CD8-positive, alpha-beta memory T cell (primary cell): ENCODE measurements at regions of chr2 and their contacts with region 1.

Region 1: DNA sequence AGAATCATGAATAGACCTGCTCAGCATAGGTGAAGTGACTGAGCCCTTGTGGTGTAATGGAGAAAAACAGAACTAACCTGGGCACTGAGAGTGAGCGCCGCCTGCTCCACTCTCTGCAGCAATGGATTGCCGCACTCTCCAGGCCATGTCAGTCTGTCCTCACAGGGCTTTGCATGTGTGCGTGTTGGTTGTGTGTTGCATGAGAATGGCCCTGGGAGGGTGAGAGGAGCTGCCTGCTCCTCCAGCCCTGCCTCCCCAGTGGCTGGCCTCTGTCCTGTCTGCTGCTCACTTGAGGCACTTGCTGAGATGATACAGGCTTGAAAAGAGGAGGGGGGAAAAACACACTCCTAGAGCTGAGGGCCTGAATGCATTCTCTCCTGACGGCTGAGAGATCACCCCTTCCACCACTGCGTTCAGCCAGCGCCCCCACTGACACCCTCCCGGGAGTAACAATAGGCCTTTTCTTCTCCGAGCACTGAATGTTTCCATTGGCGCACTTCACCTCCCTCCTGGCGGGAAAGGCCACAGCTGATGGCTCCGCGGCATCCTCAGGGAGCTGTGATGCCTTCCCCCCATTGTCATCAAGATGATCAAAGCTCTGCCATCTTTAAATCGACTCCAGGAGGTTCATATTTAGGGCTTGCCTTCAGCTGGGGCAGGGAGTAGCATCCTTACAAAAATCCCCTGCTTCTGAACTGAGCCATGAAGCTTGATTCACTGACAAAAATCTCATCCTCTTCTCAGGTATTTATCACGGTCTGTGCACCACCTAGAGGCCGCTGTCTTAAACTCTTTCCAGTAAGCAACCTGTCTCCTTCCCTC is 49.9 kb upstream of the DAPL1 start:
- DNase-seq: peak in 2 of 5 donors; percentile 14 to 24
- H3K4me3 ChIP-seq: no peak overlapping the region
- H3K4me3 Mint-ChIP-seq: no peak overlapping the region
- H3K27ac ChIP-seq: no peak overlapping the region
- H3K27ac Mint-ChIP-seq: no peak overlapping the region
- H3K4me1 ChIP-seq: no peaks in the 10 kb centered on the region
- H3K4me1 Mint-ChIP-seq: no peaks in the 10 kb centered on the region
- H3K27me3 ChIP-seq: peaks cover 7% of the 10 kb centered on the region
- H3K27me3 Mint-ChIP-seq: peaks cover 9 to 46% of the 10 kb centered on the region in 2 donors

Region 2: DNA sequence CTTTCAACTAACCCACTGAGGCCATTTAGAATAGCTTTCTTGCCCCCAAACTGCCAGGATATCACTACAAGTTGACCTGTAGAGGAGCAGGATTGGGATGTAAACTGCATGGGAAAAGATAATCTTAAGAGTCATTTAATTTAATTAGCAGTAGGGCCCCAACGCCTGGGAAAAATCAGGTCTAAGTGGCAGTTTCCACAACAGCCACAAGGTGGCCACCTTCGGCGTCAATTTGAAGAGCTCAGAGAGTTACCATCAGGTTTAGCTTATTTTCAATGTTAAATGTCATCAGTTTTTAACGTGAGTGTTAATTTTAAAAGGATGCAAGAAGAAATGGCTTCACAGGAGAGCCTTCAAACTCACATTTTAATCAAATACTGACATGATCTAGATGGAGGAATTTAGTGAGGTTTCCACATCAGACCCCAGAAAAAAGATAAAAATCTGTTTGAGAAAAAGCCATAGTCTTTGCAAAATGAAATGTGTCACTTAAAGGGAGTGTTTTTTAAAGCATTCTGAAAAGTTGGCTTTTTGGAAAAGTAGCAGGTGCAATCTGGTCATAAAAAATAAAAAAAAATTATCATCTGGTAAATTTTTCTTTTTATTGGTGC is 720.9 kb before region 1 on chr2:
- CTCF ChIA-PET with region 1: interaction called, 42 read pairs
- POLR2A ChIA-PET with region 1: no interaction called
- DNase-seq: peak in 4 of 5 donors; percentile 13 to 54 (median 21)
- H3K4me3 ChIP-seq: no peak overlapping the region
- H3K4me3 Mint-ChIP-seq: no peak overlapping the region
- H3K27ac ChIP-seq: no peak overlapping the region
- H3K27ac Mint-ChIP-seq: no peak overlapping the region
- H3K4me1 ChIP-seq: no peaks in the 10 kb centered on the region
- H3K4me1 Mint-ChIP-seq: peaks cover 0 to 10% (median 4%) of the 10 kb centered on the region in 3 donors
- H3K27me3 ChIP-seq: no peaks in the 10 kb centered on the region
- H3K27me3 Mint-ChIP-seq: peaks cover 0 to 7% of the 10 kb centered on the region in 2 donors

Region 3: DNA sequence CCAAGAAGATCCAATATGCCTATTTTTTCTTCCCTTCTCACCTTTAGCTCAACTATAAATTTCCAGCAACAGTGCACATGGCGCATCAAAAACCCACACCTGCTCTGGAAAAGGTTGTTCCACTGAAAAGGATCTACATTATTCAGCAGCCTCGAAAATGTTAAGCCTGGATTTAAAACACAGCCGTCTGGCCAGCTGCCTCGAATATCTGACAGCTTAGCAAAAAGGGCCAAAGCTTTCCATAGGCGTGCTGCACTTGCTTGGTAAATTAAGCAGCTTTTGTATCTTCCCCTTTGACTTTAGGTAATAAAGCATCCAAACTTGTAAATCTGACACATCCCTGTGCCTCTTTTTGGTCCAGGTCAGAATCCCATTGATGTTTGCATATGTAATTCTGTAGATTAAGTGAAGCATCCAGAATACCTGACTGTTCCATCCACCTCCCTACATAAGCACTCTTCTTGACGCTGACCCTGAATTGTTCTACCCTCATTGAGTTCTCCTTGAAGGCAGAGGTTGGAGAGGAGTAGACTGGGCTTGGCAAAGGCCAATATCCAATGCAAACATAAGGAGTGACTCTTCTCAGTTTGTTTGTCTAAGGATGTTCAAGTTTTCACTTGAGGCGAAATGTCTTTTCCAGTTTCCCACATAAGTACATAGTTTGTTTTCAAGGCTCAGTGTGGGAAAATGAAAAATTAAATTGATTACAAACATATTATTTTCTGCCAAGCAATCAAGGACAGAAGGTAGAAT is 70.6 kb after region 1 on chr2:
- CTCF ChIA-PET with region 1: no interaction called
- POLR2A ChIA-PET with region 1: no interaction called
- DNase-seq: no peak
- H3K4me3 ChIP-seq: no peak overlapping the region
- H3K4me3 Mint-ChIP-seq: no peak overlapping the region
- H3K27ac ChIP-seq: no peak overlapping the region
- H3K27ac Mint-ChIP-seq: no peak overlapping the region
- H3K4me1 ChIP-seq: no peaks in the 10 kb centered on the region
- H3K4me1 Mint-ChIP-seq: no peaks in the 10 kb centered on the region
- H3K27me3 ChIP-seq: no peaks in the 10 kb centered on the region
- H3K27me3 Mint-ChIP-seq: peaks cover 7 to 31% of the 10 kb centered on the region in 2 donors